Common myeloid progenitor, CD34-positive (primary cell): ENCODE measurements at regions of chr3 and their contacts with region 1.

Region 1: DNA sequence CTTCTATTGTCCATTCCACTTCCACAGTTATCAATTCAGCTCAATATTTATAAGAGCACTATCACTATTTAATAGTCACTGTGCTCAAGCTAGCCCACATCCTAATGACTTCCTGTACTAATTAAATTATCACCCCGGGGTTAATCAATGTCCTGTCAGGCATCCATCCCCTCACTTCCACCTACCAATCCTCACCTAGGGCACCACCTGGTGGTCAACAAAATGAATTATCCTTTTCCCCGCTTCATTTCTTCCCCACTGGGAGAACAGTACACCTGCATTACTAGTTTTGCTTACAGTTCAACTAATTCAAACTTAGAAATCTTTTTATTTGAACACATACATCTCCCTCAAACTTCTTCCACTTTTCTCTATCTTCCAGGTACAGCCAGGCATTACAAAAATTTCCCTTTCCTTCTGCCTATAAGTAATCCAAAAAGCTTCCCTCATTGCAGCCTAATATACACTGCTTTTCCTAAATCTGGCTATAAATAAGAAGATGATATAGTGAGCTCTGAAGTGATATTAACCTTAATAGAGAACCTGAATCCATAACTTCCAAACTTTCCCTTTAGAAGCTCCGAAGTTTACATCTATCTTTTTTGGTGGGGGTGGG is 68.5 kb downstream of the TMCC1 start:
- DNase-seq: peak; percentile 69 to 77 (median 70)
- H3K4me3 ChIP-seq: no peak overlapping the region
- H3K27ac ChIP-seq: no peak overlapping the region
- H3K4me1 ChIP-seq: peaks cover 8 to 32% (median 16%) of the 10 kb centered on the region in 4 experiments
- H3K27me3 ChIP-seq: no peaks in the 10 kb centered on the region

Region 2: DNA sequence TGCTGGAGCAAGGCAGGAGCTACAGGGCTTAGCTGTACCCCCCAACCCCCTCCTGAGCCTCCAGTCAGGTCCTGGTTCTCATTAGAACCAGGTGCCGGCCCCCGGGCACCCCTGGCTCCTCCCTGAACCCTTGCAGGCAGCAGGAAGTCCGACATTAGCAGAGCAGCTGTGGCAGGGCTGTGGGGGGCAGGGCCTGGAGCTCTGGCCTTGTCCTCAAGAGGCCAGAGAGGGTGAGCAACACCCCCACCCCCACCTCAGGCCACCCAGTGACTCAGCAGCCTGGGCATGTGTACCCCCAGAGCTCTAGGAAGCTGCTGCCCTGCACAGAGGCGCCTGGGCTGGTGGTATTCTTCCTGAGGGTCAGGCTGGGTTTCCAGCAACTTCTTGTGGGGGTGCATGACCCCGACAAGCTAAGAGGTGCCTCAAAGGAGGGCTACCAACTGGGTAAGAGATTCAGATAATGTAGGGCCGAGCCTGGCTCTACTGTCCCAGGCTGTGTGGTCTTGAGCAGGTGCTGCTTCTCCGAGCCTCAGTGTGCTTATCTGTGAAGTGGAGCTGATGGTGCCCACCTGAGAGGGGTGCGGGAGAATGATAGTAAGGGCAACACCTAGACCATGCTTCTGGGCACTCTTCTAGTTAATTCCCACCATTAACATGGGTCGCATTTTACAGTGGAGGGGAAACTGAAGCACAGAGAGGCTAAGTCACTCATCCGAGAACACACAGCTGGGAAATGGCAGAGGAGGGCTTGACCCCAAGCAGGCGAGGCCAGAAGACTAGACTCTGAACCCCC is 266.1 kb before region 1 on chr3:
- CTCF ChIA-PET with region 1: no interaction called
- POLR2A ChIA-PET with region 1: no interaction called
- DNase-seq: peak in 2 of 3 donors; percentile 36 to 46
- H3K4me3 ChIP-seq: no peak overlapping the region
- H3K27ac ChIP-seq: peak overlapping the region in 1 of 2 experiments; percentile 3
- H3K4me1 ChIP-seq: peaks cover 2 to 62% (median 52%) of the 10 kb centered on the region in 4 experiments
- H3K27me3 ChIP-seq: no peaks in the 10 kb centered on the region

Region 3: DNA sequence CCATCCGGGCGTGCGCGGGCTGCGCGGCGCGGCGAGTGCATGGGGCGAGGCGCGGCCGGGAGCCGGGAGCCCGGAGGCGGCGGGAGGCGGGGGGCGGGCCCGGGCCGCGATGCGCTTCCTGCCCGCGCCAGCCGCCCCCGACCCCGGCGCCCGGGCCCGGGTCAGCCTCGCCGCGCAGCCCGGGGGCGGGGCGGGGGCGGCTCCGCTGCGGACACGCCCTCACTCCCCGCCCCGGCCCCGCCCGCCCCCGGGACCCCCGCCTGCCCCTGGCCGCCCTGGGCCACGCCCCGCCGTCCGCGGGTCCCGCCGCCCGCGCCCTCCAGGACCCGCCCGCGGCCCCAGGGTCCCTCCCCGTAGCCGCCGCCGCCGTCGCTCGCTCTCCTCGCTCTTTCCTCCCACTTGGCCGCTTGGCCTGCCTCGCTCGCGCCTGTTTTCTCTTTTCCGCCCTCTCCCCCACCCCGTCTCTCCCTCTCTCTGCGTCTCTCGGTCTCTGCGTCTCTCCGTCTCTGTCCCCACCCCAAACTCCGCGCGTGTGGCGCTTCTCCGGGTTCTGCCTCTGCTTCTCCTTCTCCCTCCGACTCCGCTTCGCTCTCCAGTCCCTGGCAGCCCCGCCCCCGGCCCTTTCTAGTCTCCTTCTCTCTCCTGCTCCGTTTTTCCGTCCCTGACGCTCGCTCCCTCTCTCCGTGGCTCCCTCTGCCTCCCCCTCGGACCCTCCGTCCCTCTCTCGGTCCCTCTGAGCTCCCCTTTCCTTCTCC is 218.2 kb before region 1 on chr3 and contains the start of gene PLXND1:
- CTCF ChIA-PET with region 1: no interaction called
- POLR2A ChIA-PET with region 1: no interaction called
- DNase-seq: peak in 2 of 3 donors; percentile 55 to 65
- H3K4me3 ChIP-seq: peak within 1 kb of the TSS; percentile 52 to 82 (median 73)
- H3K27ac ChIP-seq: peak within 1 kb of the TSS in 1 of 2 experiments; percentile 25
- H3K4me1 ChIP-seq: peaks cover 0 to 84% (median 70%) of the 10 kb centered on the region in 4 experiments
- H3K27me3 ChIP-seq: no peaks in the 10 kb centered on the region

Region 4: GRCh38 chr3:129627429-129628168 is 197.4 kb before region 1 on chr3:
- CTCF ChIA-PET with region 1: interaction called, 130 read pairs
- POLR2A ChIA-PET with region 1: no interaction called
- DNase-seq: peak; percentile 83 to 91 (median 90)
- H3K4me3 ChIP-seq: peak overlapping the region; percentile 51 to 81 (median 71)
- H3K27ac ChIP-seq: no peak overlapping the region
- H3K4me1 ChIP-seq: peaks cover 0 to 44% (median 28%) of the 10 kb centered on the region in 4 experiments
- H3K27me3 ChIP-seq: no peaks in the 10 kb centered on the region

Region 5: DNA sequence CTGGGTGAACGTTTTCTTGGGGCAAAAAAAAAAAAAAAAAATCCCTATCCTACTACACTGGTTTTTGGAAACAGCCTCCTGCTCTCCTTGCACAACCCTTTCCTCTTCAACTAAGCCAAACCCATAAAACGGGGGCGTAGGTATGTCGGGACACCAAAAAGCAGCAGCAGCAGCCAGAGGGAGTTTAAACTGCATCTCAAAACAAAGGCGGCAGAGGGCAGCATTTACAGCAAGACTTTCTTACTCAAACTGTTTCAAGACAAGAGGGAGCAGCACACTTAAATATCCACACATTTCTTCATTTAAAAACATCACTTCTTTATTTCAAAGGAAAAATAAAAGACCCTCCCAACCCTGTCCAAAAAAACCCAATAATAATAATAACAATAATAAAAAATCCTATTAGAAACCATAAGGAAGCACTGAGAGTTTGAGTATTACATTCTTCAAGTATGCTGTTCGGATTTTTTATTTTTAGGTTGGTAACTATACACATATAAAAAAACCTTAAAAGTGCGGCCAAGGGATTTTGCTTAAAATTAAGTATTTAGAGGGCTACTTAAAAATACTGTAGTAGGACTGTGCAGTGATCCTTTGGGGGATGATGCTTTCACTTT is 174.7 kb before region 1 on chr3:
- CTCF ChIA-PET with region 1: interaction called, 108 read pairs
- POLR2A ChIA-PET with region 1: no interaction called
- DNase-seq: peak; percentile 73 to 85 (median 80)
- H3K4me3 ChIP-seq: no peak overlapping the region
- H3K27ac ChIP-seq: no peak overlapping the region
- H3K4me1 ChIP-seq: peaks cover 0 to 3% (median under 1%) of the 10 kb centered on the region in 4 experiments
- H3K27me3 ChIP-seq: no peaks in the 10 kb centered on the region

Region 6: GRCh38 chr3:129809297-129809696 is 15.7 kb before region 1 on chr3:
- CTCF ChIA-PET with region 1: interaction called, 20 read pairs
- POLR2A ChIA-PET with region 1: interaction called, 6 read pairs
- DNase-seq: no peak
- H3K4me3 ChIP-seq: no peak overlapping the region
- H3K27ac ChIP-seq: no peak overlapping the region
- H3K4me1 ChIP-seq: peaks cover 0 to 5% (median 2%) of the 10 kb centered on the region in 4 experiments
- H3K27me3 ChIP-seq: no peaks in the 10 kb centered on the region

Region 7: GRCh38 chr3:129911261-129911861 is 86.3 kb after region 1 on chr3:
- CTCF ChIA-PET with region 1: no interaction called
- POLR2A ChIA-PET with region 1: no interaction called
- DNase-seq: peak in 2 of 3 donors; percentile 74 to 86
- H3K4me3 ChIP-seq: no peak overlapping the region
- H3K27ac ChIP-seq: no peak overlapping the region
- H3K4me1 ChIP-seq: peaks cover 3 to 11% (median 6%) of the 10 kb centered on the region in 4 experiments
- H3K27me3 ChIP-seq: no peaks in the 10 kb centered on the region